ENCODE measurements at regions of chr3 and their contacts with region 1.

Region 1: DNA sequence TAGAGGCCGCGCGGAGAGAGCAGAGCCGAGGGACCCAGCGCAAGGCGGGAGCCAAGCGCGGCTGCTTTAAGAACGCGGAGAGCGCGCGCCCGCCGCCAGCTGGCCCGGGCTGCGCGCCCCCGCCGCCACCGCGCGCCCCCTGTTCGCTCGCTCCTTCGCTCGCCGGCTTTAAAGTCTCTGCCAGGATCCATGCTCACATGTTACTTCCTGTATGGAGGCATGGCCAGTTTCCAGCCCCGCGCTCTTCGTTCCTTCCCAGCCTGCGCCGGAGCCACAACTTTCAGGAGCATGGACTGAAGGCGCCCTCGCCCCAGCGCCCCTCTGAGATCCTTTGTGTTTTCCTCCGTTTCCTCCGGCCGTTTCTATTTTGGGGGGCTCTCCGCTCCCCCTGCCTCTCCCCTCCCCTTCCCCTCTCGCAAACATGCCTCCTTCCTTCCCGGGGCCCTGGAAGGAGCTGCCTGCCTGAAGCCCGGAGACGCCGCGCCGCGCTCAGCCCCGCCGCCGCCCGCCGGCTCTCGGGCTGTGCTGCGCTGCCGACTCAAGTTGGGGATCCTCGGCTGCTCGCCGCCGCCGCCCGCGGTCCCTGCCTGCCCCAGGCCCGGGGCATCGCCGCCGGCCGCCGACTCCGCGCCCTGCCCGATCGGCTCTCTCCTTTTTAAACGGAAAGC is at the start of gene PTPRG:
- DNase-seq: peak; percentile 61 to 94
- H3K4me3 ChIP-seq: peak within 1 kb of the TSS; percentile 98 to 99
- H3K27ac ChIP-seq: peak within 1 kb of the TSS; percentile 96 to 99
- H3K4me1 ChIP-seq: peaks cover 0 to 8% of the 10 kb centered on the region in 2 donors
- H3K27me3 ChIP-seq: no peaks in the 10 kb centered on the region
- CTCF ChIP-seq: no peak
- total RNA-seq, gene PTPRG: 129 TPM

Region 2: DNA sequence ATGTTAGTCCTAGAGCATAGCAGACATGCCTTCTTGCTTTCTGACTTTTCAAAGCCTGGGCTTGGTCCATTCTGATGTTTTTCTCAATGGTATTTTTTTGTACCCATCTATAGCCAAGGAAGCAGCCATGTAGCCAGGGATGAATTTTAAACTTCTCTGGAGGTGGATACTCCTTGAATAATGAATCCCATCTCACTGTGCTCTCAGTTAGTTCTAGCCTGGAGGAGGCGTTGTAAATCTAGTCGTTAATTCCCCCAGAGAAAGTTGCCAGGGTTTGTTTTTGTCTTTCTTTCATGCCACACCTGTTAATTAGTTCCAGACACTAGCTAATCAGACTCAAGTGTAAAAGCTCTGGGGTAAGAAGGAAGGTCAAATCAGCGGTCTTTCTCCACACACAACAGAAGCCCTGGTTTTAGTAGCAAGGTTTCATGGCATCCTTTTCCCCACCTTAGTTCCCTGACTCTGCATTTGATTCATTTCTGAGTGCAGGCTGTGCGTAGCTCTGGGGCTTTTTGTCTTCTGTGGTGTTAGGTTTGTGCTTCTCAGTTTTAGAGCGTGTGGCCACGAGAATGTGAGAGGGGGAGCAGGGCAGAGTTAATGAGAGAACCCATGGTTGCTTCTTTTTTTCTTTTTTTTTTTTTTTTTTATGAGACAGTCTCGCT is 19.6 kb after region 1 on chr3:
- intact Hi-C with region 1: no loop called
- DNase-seq: no peak
- H3K4me3 ChIP-seq: no peak overlapping the region
- H3K27ac ChIP-seq: peak overlapping the region; percentile 33 to 34
- H3K4me1 ChIP-seq: peaks cover 0 to 26% of the 10 kb centered on the region in 2 donors
- H3K27me3 ChIP-seq: no peaks in the 10 kb centered on the region
- CTCF ChIP-seq: no peak

Region 3: DNA sequence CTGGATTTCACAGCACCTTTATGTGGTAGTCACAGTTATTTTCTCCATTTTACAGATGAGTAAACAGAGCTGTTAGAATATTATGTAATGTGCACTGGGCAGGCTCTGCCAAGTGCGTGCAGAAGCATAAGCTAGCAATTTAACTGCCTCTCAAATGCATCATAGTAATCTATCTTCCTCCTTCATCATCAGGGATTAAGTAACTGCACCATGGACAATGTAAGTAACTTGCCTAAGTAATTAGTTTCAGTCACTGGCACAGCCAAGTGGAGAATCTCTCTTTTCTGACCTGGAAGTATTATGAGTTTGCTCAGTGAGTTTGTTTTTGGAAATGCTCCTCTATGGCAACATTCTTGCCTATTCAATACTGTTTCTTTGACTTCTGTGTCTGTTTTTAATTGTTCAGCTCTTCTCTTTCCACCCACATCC is 260.3 kb after region 1 on chr3:
- intact Hi-C with region 1: loop called (anchors 5 kb)
- DNase-seq: no peak
- H3K4me3 ChIP-seq: peak overlapping the region in 1 of 2 donors; percentile 35
- H3K27ac ChIP-seq: peak overlapping the region; percentile 76 to 80
- H3K4me1 ChIP-seq: peaks cover 5 to 24% of the 10 kb centered on the region in 2 donors
- H3K27me3 ChIP-seq: no peaks in the 10 kb centered on the region
- CTCF ChIP-seq: no peak

Region 4: GRCh38 chr3:61927332-61927731 is 365.8 kb after region 1 on chr3:
- intact Hi-C with region 1: loop called (anchors 2 kb)
- DNase-seq: peak in 1 of 2 donors; percentile 77
- H3K4me3 ChIP-seq: no peak overlapping the region
- H3K27ac ChIP-seq: peak overlapping the region; percentile 70 to 72
- H3K4me1 ChIP-seq: peaks cover 0 to 49% of the 10 kb centered on the region in 2 donors
- H3K27me3 ChIP-seq: no peaks in the 10 kb centered on the region
- CTCF ChIP-seq: no peak

Region 5: DNA sequence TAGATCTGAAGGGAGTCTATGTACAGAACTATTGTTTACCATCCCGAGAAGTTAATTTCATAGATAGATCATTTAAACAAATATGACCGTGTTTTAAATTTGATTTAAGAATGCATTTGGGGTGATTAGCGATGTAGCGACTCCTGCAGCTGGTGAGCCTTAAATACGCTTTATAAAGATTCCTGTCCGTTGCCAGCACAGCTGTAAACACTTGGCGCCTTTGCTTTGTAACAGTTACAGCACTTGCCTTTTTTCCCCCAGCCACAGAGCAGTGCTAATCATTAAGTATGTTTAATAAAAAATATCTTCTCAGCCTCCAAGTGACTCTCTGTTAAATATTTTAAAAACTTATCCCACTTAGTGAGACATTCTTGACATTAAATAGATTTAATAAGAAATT is 478.1 kb after region 1 on chr3:
- intact Hi-C with region 1: loop called (anchors 5 kb)
- DNase-seq: no peak
- H3K4me3 ChIP-seq: no peak overlapping the region
- H3K27ac ChIP-seq: peak overlapping the region in 1 of 2 donors; percentile 59
- H3K4me1 ChIP-seq: peaks cover 0 to 12% of the 10 kb centered on the region in 2 donors
- H3K27me3 ChIP-seq: no peaks in the 10 kb centered on the region
- CTCF ChIP-seq: no peak

Region 6: GRCh38 chr3:62159709-62160092 is 598.2 kb after region 1 on chr3:
- intact Hi-C with region 1: loop called (anchors 2 kb)
- DNase-seq: peak in 1 of 2 donors; percentile 93
- H3K4me3 ChIP-seq: no peak overlapping the region
- H3K27ac ChIP-seq: peak overlapping the region; percentile 86 to 90
- H3K4me1 ChIP-seq: peaks cover 14 to 68% of the 10 kb centered on the region in 2 donors
- H3K27me3 ChIP-seq: no peaks in the 10 kb centered on the region
- CTCF ChIP-seq: no peak